ENCODE measurements at regions of chr11 and their contacts with region 1.

Region 1: DNA sequence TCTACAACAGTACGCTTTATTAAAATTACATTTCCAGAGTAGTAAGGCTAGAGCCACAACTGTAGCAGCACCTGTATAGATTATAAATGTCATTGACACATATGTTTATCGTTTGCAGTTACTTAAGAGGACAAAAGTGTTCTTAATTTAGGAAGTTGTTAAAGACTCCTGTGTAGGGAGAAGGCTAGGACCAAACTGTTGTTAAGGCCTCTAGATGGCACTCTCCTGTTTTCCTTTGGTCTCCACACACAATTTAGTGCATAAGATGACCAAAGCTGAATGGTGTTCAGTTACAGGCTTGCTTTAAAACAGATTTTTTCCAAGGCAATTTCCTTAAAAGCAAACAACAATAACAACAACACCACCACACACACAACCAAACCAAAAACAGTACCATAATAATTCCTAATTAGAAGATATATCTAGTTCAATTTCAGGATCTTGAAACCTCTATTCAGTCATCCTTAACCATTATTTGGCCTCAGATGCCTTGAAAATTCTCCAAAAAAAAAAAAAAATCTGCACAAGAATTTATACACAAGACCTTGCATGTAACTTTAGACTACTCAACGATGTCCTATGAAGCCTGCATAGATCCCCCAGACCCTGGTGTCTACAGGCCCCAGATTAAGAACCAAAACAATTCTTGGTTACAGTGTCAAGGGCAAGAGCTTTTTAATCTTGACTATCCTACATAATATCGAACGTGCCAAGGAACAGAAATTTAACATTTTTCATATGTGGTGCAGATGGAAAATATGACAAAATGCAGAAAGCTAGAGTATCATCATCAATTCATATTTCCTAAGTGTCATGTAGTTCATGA is 42.6 kb upstream of the APOA1 start:
- DNase-seq: peak; percentile 68
- CTCF ChIP-seq: peak; percentile 64

Region 2: DNA sequence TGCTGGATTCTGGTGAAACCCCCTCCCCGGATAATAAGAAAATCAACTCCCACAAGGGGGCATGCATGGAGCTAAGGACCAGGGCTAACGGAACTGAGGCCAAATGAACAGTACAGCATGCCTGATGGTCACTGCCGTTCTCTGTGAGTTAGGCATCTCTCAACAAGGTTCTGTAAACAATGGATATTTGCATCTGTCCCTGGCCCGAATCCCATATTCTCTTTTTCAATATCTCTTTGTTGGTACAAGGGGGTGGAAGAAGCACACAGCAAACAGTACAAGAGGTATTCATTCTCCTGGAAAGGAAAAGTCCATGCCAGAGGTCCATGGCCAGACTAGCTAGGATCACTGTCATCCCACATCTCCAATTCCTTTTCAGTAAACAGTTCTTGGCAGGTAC is 10.4 kb before region 1 on chr11:
- CTCF ChIA-PET with region 1: interaction called, 24 read pairs
- POLR2A ChIA-PET with region 1: no interaction called
- DNase-seq: no peak
- CTCF ChIP-seq: no peak

Region 3: GRCh38 chr11:116890193-116890592 is 10.2 kb after region 1 on chr11:
- CTCF ChIA-PET with region 1: interaction called, 46 read pairs
- POLR2A ChIA-PET with region 1: no interaction called
- DNase-seq: peak; percentile 40
- CTCF ChIP-seq: no peak

Region 4: DNA sequence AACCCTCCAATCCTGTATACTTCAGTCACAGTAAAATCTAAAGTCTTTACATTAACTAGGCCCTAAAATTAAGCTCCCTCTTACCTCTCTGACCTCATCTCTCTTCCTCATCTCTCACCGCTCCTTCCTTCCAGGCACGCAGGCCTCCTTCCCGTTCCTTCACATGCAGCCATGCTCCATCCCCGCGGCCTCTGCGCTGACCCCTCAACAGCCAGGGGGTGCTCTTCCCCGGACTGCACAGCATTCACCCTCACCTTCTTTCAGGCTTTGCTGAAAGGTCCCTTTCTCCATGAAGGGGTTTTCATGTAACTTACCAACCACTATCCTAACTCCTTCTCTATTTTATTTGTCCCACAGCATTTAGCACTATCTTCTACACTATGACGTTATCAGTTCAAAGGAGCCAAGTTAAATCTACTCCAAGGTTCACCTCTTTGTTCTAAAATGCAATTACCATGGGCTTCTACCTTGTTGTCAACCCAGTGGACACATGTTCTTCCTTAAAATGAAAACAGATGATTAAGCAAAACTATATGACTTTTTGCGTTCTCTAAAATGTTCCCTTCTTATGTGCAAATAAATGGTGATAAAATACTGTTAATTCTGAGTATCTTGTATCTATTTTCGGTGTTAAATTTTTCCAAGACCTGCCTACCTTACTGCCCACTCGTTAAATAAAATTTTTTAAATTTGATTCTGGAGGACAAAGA is 15.2 kb after region 1 on chr11:
- CTCF ChIA-PET with region 1: interaction called, 46 read pairs
- POLR2A ChIA-PET with region 1: no interaction called
- DNase-seq: peak; percentile 47
- CTCF ChIP-seq: peak; percentile 59

Region 5: DNA sequence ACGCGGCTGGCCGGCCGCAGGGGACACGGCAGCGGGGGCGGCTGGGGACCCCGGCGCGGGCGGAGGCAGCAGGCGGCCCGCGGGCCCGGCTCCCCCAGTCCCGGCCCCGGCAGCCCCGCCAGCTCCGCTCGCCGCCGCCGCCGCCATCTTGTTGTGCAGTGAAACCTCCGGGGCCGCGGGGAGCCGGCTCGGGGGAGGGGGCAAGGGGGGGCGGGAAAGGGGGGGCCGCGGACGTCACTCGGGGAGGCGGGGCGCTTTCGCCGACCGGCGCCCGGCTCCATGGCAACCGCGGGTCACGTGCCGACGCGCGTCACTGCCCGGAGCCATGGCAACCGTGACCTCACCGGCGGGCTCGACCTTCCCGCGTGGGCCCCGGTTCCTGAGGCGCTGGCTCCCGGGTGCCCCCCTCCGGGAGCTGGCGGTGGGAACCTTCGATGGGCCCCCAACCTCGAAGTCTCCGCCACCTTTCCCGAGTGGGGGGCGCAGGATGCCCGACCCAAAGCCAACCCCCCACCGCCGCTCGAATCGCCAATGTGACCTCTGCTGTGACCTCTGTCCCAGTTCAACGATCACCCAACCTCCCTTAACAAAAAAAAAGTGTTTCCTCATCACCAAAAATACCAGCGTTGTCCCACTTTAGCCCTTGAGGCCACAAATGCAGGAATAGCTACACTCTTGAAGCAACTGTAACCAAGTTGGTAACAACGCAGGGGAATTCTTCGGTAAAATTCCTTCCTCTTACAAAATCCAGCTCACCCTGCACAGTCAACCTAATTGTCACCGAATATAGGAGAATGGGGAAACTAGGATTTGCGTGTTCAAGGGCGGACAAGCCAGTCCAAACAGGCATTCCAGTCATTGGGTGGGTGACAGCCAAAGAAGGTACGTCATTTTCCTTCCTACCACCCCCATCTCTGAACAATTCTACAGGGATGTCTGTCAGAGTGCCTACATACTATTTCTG is 218.5 kb after region 1 on chr11 and contains the start of gene SIK3:
- CTCF ChIA-PET with region 1: interaction called, 132 read pairs
- POLR2A ChIA-PET with region 1: no interaction called
- DNase-seq: peak; percentile 99
- CTCF ChIP-seq: peak; percentile 68

Measured in GM10248 (cell line).